GM13976 (cell line): ENCODE measurements at regions of chr18 and their contacts with region 1.

Region 1: GRCh38 chr18:76351961-76352581 is 143.0 kb downstream of the ZNF516 start:
- DNase-seq: no peak
- CTCF ChIP-seq: no peak

Region 2: DNA sequence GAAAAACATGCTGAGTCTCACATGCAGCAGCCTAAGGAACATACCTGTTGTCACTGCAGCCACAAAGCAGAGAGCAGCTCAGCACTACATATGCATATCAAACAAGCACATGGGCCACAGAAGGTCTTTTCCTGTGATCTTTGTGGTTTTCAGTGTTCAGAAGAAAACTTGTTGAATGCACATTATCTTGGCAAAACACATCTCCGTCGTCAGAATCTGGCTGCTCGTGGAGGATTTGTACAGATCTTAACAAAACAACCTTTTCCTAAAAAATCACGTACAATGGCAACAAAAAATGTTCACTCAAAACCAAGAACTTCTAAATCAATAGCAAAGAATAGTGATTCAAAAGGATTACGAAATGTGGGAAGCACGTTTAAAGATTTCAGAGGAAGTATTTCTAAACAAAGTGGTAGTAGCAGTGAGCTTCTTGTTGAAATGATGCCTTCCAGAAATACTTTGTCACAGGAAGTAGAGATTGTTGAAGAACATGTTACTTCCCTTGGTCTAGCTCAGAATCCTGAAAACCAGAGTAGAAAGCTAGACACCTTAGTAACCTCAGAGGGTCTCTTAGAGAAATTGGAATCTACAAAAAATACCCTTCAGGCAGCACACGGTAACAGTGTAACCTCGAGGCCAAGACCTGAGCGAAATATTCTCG is 1720.3 kb before region 1 on chr18:
- in situ Hi-C with region 1: loop called (anchors 25 kb)
- DNase-seq: no peak
- CTCF ChIP-seq: no peak